Vagina (tissue), 2 donors: ENCODE measurements at regions of chr6 and their contacts with region 1.

Region 1: GRCh38 chr6:155974811-155975323 is 519.2 kb upstream of the NOX3 start:
- DNase-seq: no peak
- H3K4me3 ChIP-seq: no peak overlapping the region
- H3K27ac ChIP-seq: peak overlapping the region; percentile 48
- H3K4me1 ChIP-seq: peaks cover 10% of the 10 kb centered on the region
- H3K27me3 ChIP-seq: no peaks in the 10 kb centered on the region
- CTCF ChIP-seq: no peak
- POLR2A ChIP-seq: no peak

Region 2: DNA sequence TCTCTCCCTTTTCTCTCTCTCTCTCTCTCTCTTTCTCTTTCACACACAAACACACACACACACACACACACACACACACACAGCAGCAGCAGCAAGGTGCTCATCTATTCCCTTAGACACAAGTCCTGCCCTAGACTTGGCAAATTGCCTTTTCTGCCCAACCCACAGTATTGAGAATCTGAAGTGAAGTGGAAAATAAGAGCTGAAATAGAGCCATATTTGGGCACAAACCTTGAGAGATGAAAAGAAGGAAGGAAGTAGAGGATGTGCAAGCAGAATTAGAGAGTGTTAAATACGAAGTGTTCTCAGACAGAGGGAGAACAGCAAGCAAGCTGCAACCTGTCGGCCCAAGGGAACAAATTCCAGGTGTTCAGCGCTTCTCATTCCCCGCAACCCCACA is 38.3 kb after region 1 on chr6:
- intact Hi-C with region 1: no loop called
- DNase-seq: no peak
- H3K4me3 ChIP-seq: no peak overlapping the region
- H3K27ac ChIP-seq: no peak overlapping the region
- H3K4me1 ChIP-seq: no peaks in the 10 kb centered on the region
- H3K27me3 ChIP-seq: no peaks in the 10 kb centered on the region
- CTCF ChIP-seq: no peak
- POLR2A ChIP-seq: no peak

Region 3: DNA sequence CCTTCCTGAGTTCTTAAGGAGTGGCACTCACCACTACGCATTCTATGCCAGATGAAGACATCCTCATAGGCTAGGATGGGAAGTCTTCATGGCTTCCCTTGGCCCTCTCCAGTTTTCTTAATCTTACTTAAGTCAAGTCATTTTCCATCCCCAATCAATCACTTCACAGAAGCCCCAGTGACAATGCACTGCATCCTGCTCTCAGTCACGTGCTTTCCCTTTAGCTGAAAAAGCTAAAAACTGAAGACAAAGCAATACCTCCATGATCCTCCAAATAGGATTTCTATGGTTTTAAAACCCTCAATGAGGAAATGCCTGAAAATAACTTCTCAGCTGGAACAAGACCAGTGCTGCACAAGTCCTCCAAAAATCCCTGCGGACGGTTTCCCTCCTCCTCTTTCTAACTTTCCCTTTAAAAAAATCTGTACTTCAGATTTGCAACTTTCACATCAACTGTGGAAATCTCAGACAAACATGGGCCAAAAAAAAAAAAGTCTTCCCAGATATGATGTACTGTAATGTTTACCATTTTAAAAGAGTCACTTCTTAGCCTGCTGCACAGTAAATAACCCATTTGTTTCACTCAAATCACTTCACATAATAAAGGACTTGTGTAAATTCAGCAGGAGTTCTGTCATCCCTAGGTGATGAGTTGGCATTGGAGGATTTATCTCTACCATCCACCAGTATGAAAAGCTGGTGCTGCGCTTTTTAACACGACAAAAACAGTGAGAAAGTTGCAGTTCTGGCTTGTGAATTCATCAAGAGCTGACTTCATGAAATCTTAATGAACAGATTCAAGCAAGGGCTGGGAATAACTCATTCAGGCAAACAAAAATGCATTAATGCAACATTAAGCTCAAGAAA is 70.8 kb after region 1 on chr6:
- intact Hi-C with region 1: no loop called
- DNase-seq: no peak
- H3K4me3 ChIP-seq: no peak overlapping the region
- H3K27ac ChIP-seq: peak overlapping the region; percentile 46
- H3K4me1 ChIP-seq: peaks cover 14% of the 10 kb centered on the region
- H3K27me3 ChIP-seq: no peaks in the 10 kb centered on the region
- CTCF ChIP-seq: no peak
- POLR2A ChIP-seq: no peak

Region 4: DNA sequence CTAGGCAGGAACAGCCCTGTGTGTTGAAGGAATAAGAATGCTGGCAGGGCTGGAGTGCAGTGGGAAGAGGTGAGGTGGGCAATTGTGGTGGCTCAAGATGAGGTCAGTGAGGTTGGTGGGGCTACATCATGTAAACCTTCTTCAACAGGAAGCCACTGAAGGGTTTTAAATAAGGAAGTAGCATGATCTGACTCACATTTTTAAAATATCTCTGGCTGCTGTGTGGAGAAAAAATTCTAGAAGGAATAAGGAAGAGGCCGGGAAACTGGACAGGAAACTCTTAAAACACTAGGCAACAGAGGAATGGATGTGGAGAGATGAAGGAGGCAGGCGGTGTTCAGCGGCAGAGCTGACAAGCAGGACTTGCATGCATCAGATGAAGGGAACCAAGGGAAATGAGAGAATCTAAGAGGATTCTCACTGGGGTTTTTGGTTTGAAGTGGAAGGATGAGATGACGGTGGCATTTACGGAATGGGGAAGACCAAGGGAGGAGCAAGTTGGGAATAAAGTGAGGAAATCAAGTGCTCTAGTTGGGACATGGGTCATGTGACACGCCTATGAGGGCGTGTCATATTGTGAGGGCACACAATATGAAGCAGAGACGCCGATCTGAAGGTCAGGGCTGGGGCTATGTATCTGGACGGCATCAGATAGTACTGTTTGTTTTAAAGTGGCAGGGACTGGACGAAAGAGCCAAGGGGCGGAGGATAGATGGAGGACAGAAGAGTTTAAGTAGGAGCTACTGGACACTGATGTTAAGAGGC is 1330.2 kb after region 1 on chr6:
- intact Hi-C with region 1: loop called (anchors 5 kb)
- DNase-seq: no peak
- H3K4me3 ChIP-seq: no peak overlapping the region
- H3K27ac ChIP-seq: peak overlapping the region; percentile 17
- H3K4me1 ChIP-seq: peaks cover 22% of the 10 kb centered on the region
- H3K27me3 ChIP-seq: no peaks in the 10 kb centered on the region
- CTCF ChIP-seq: no peak
- POLR2A ChIP-seq: no peak